Sciatic nerve (tissue), 2 donors: ENCODE measurements at regions of chr12 and their contacts with region 1.

Region 1: GRCh38 chr12:124518051-124518932 is 49.1 kb downstream of the NCOR2 start:
- DNase-seq: peak; percentile 100
- ATAC-seq: peak; percentile 81

Region 2: GRCh38 chr12:124567661-124568373 is 49.5 kb after region 1 on chr12:
- intact Hi-C with region 1: loop called (anchors 10 kb)
- DNase-seq: peak; percentile 98
- ATAC-seq: peak; percentile 88

Region 3: DNA sequence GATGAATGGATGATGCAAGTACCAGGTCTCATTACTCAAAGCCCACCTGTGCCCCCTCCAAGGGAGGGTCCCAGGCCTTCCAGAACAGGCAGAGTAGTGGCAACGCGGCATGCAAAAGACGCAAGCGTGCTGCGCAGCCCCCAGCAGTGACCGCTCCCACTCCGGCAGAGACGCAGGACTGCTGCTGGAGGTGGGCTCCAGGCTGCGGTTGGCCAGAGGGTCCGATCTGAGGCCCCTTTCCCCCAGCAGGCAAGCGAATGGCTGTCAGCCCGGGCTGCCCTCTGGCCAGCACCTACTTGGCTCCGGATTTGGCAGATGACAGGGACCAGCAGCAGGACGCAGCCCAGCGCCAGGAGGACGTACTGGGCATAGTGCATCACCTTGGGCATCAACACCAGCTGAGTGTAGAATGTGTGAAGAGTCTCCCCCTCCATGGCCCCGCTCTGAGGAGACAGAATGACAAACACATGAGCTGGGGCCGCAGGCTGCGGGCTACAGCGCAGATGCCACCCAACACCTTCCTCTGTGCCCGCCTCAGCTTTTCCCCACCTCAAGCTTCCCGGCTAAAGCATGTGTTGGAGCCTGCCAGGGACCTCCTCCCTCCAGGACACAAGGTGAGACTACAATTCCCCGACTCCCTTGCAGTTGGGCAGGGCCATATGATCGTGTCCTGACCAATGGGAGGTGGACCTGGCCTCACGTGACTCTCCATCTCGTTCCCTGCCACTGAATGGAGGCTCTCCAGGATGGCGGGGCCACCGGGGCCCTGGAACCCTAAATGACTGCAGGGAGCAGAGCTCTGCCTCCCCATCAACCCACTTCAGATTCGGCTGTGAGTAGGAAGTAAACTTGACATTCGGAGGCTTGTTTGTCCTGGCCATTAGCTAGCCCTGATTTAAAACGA is 268.0 kb after region 1 on chr12:
- intact Hi-C with region 1: no loop called
- DNase-seq: peak; percentile 86
- ATAC-seq: peak; percentile 93